ENCODE measurements at regions of chr3 and their contacts with region 1.

Region 1: DNA sequence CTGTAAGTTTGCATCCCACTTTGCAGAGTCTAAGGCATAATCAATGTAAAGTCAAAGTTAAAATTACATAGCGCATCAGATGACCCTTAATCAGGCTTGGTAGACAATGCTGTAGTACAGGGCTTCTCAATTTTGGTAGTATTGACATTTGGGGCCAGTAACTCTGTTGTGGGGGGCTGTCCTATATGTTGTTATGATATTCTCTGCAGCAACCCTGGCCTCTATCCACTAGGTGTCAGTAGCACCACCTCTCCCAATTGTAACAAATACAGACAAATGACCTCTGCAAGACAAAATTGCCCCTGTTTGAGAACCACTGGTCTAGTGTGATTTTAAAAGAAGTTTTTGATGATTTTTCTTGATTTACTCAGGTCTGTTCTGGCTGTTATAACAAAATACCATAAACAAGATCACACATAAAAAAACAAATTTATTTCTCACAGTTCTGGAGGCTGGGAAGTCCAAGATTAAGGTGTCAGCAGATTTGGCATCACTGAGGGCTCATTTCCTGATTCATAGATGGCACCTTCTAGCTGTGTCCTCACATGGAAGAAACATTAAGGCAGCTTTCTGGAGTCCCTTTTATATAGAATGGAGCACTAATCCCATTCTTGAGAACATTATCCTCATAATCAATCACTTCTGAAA is 37.6 kb upstream of the SLC9A9 start:
- DNase-seq: peak; percentile 65
- H3K4me3 Mint-ChIP-seq: no peak overlapping the region
- H3K27ac Mint-ChIP-seq: no peak overlapping the region
- H3K4me1 Mint-ChIP-seq: peaks cover 11% of the 10 kb centered on the region
- H3K27me3 Mint-ChIP-seq: no peaks in the 10 kb centered on the region
- CTCF ChIP-seq: peak; percentile 76

Region 2: GRCh38 chr3:143775459-143775858 is 110.4 kb before region 1 on chr3:
- CTCF ChIA-PET with region 1: interaction called, 34 read pairs
- POLR2A ChIA-PET with region 1: no interaction called
- intact Hi-C with region 1: loop called (anchors 1 kb)
- DNase-seq: peak; percentile 45
- H3K4me3 Mint-ChIP-seq: no peak overlapping the region
- H3K27ac Mint-ChIP-seq: no peak overlapping the region
- H3K4me1 Mint-ChIP-seq: peaks cover 5% of the 10 kb centered on the region
- H3K27me3 Mint-ChIP-seq: no peaks in the 10 kb centered on the region
- CTCF ChIP-seq: peak; percentile 57

Region 3: DNA sequence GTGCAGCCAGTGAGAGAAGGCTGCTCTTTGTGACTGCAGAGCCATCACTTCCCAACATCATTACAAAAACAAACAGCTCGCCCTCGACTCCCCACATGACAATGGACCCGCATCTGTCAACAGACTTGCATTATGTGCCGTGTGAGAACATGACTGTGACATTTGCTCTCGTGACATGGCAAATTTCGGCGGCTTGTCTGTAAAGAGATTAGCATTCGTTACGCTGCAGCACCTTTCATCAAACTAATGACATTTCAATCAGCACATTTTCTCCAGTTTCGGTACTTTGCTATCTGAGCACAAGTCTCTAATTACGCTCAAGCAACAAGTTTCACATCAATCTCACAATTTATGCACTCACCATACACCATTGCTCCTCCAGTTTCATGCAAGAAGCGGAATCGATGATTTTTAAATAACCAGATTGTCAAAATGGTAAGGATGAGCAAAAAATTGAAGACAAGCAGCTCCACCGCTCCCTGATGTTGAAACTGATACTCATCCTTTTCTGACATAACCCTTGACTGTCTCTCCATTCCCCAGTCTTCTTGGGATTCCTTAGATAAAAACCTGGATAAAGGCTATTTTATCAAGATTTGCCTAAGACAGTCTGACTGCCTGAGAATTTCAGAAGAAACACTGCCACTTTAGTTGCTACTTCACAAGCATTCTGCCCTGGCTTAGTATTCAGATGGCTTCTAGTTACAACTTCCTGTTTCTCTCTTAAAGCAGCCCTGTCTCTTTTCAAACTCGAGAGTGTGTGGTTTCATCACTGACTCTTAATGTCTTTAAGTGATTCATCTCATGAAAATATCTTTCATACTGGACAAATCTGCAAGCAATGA is 37.9 kb before region 1 on chr3 and contains the start of gene SLC9A9:
- CTCF ChIA-PET with region 1: interaction called, 37 read pairs
- POLR2A ChIA-PET with region 1: interaction called, 23 read pairs
- intact Hi-C with region 1: no loop called
- DNase-seq: peak; percentile 78
- H3K4me3 Mint-ChIP-seq: peak within 1 kb of the TSS; percentile 97
- H3K27ac Mint-ChIP-seq: peak within 1 kb of the TSS; percentile 91
- H3K4me1 Mint-ChIP-seq: peaks cover 49% of the 10 kb centered on the region
- H3K27me3 Mint-ChIP-seq: no peaks in the 10 kb centered on the region
- CTCF ChIP-seq: no peak
- total RNA-seq, gene SLC9A9: 2.0 and 2.2 TPM in 2 replicates

Region 4: DNA sequence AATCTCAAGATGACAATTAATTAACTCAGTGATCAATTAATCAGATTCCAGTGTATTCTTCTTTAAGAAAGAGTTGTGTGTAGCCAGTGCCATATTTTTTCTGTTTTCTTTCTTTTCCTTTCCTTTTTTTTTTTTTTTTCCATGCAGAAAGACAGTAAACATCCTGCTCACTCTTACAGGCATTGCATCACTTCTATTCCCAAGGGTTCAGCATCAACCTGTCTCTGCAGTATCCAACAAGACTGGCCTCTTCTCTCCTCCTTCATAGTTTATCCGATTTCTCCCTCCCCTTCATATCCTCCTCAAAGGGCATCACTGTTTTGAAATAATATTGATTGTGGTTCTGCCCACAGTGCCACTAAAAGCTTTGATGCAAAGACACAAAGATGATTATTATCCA is 20.6 kb before region 1 on chr3:
- CTCF ChIA-PET with region 1: interaction called, 30 read pairs
- POLR2A ChIA-PET with region 1: no interaction called
- intact Hi-C with region 1: no loop called
- DNase-seq: no peak
- H3K4me3 Mint-ChIP-seq: no peak overlapping the region
- H3K27ac Mint-ChIP-seq: no peak overlapping the region
- H3K4me1 Mint-ChIP-seq: peaks cover 10% of the 10 kb centered on the region
- H3K27me3 Mint-ChIP-seq: no peaks in the 10 kb centered on the region
- CTCF ChIP-seq: no peak

Region 5: GRCh38 chr3:143875546-143875945 is 10.4 kb before region 1 on chr3:
- CTCF ChIA-PET with region 1: interaction called, 30 read pairs
- POLR2A ChIA-PET with region 1: no interaction called
- intact Hi-C with region 1: no loop called
- DNase-seq: no peak
- H3K4me3 Mint-ChIP-seq: no peak overlapping the region
- H3K27ac Mint-ChIP-seq: no peak overlapping the region
- H3K4me1 Mint-ChIP-seq: no peaks in the 10 kb centered on the region
- H3K27me3 Mint-ChIP-seq: no peaks in the 10 kb centered on the region
- CTCF ChIP-seq: no peak

Region 6: DNA sequence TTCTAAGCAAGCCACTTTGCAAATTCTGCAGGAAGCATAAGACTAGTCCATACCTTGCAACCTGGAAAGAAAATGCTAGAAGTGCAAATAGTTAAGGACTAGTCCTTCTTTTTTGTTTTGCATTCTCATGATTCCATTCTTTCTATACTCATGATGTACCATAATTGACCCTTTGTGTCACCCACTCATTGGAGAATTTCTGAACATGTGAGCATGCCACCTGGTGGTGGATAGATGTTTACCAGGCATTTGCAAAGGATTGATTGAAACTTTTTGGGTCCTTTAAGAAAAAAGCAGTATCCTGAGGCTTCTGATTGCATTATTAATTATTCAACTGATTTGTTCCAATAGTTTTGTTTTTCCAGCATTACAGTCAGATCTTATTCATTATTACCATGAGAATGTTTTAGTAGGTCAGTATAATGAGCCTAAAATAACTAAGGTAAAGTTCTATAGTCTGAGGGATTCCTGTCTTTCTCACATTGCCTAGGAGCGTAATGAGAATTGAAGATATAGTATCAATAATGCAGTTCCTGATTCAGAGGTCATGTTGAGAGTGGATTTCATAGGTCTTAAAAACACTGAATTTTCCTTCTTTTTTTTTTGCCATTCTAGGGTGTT is 65.6 kb after region 1 on chr3:
- CTCF ChIA-PET with region 1: interaction called, 29 read pairs
- POLR2A ChIA-PET with region 1: interaction called, 3 read pairs
- intact Hi-C with region 1: loop called (anchors 1 kb)
- DNase-seq: peak; percentile 62
- H3K4me3 Mint-ChIP-seq: no peak overlapping the region
- H3K27ac Mint-ChIP-seq: no peak overlapping the region
- H3K4me1 Mint-ChIP-seq: no peaks in the 10 kb centered on the region
- H3K27me3 Mint-ChIP-seq: no peaks in the 10 kb centered on the region
- CTCF ChIP-seq: peak; percentile 56